ENCODE measurements at regions of chr18 and their contacts with region 1.

Region 1: DNA sequence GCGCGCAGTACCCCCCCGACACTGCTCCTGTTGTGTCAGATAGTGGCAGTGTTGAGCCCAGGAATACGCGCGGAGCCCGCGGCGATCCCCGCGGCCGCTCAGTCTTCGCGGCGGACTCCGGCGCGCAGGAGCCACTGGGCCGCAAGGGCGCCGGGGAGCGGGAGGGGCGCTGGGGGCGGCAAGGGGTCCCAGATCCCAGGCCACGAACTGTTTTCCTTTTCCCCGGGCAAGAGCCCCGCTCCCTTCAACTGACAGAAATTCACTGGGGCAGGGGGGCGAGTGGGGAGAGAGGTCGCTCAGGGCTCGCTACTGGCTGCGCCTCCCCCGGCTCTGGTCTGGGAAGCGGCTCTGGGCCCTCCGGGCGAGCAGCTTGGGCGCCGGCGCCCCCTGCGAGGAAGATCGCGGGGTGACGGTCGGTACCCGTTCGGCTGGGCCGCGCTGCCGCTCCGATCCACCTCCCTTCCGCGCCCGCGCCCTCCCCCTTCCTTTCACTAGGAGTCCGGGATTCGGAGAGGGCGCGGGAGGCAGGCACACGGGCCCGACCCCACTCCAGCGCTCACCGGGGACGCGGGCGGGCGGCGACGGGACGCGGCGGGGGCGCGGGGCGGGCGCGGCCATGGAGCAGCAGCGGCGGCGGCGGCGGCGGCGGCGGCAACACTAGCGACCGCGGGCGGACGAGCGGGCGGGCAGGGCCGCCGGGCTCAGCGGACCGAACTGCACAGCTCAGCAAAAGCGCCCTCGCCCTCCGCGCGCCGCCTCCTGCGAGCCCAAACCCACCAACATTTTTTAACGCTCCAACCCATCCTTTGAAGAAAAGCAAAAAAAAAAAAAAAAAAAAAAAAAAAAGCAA is 1.4 kb upstream of the SETBP1 start:
- DNase-seq: peak; percentile 73 to 82 (median 76)
- H3K4me3 ChIP-seq: peak overlapping the region; percentile 58 to 92 (median 79)
- H3K4me3 Mint-ChIP-seq: peak overlapping the region; percentile 75 to 87
- H3K27ac ChIP-seq: peak overlapping the region in 1 of 2 donors; percentile 42
- H3K27ac Mint-ChIP-seq: no peak overlapping the region
- H3K4me1 ChIP-seq: peaks cover 8 to 10% of the 10 kb centered on the region in 2 donors
- H3K4me1 Mint-ChIP-seq: peaks cover 7% of the 10 kb centered on the region
- H3K27me3 ChIP-seq: peaks cover 60% of the 10 kb centered on the region in 2 donors
- H3K27me3 Mint-ChIP-seq: peaks cover 11 to 34% (median 17%) of the 10 kb centered on the region in 3 donors
- CTCF ChIP-seq: peak; percentile 48

Region 2: GRCh38 chr18:45212181-45213039 is 533.1 kb after region 1 on chr18:
- intact Hi-C with region 1: loop called (anchors 2 to 5 kb)
- DNase-seq: peak; percentile 76 to 83 (median 80)
- H3K4me3 ChIP-seq: no peak overlapping the region
- H3K4me3 Mint-ChIP-seq: no peak overlapping the region
- H3K27ac ChIP-seq: no peak overlapping the region
- H3K27ac Mint-ChIP-seq: no peak overlapping the region
- H3K4me1 ChIP-seq: peaks cover 0 to 3% of the 10 kb centered on the region in 2 donors
- H3K4me1 Mint-ChIP-seq: peaks cover 9% of the 10 kb centered on the region
- H3K27me3 ChIP-seq: no peaks in the 10 kb centered on the region
- H3K27me3 Mint-ChIP-seq: peaks cover 0 to 2% (median 2%) of the 10 kb centered on the region in 3 donors
- CTCF ChIP-seq: peak; percentile 99

Region 3: DNA sequence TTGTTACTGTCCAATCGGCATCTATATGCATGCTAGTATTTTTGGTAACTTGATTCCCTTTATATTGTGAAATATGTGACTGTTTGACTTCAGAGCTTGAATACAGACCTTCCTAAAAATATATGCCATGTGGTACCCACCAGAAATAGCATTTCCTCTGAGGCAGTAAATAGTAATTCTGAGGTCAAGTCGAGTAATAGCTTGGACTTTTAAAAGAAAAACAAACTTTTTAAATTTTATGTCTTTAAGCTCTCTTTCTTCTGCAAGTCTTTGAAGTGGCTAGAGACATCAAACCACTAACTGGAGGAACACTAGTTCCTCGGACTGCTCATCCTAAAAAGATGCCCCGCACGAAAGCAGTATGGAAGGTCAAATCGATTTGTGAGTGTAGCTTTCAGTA is 539.2 kb after region 1 on chr18:
- intact Hi-C with region 1: loop called (anchors 2 to 5 kb)
- DNase-seq: no peak
- H3K4me3 ChIP-seq: no peak overlapping the region
- H3K4me3 Mint-ChIP-seq: no peak overlapping the region
- H3K27ac ChIP-seq: no peak overlapping the region
- H3K27ac Mint-ChIP-seq: no peak overlapping the region
- H3K4me1 ChIP-seq: no peaks in the 10 kb centered on the region
- H3K4me1 Mint-ChIP-seq: no peaks in the 10 kb centered on the region
- H3K27me3 ChIP-seq: no peaks in the 10 kb centered on the region
- H3K27me3 Mint-ChIP-seq: peaks cover 0 to 2% (median 0%) of the 10 kb centered on the region in 3 donors
- CTCF ChIP-seq: no peak